Activated T-helper 1 cell treated with anti-CD3 and anti-CD28 coated beads, Interleukin-12 subunit alpha, Interleukin-12 subunit beta, Interleukin-2, Interleukin-4 antibody, amounts not matched to agents 30 ng/mL and 10 ng/mL and 1 ng/mL, durations not matched to agents 14 hours and 24 hours and 36 hours (primary cell): ENCODE measurements at regions of chr14 and their contacts with region 1.

Region 1: GRCh38 chr14:53109105-53110041 is 43.8 kb downstream of the DDHD1 start:
- DNase-seq: peak; percentile 66
- H3K4me3 Mint-ChIP-seq: no peak overlapping the region
- H3K27ac Mint-ChIP-seq: no peak overlapping the region
- H3K4me1 Mint-ChIP-seq: peaks cover 33% of the 10 kb centered on the region
- H3K27me3 Mint-ChIP-seq: no peaks in the 10 kb centered on the region

Region 2: GRCh38 chr14:52852810-52853523 is 256.4 kb before region 1 on chr14:
- intact Hi-C with region 1: no loop called
- DNase-seq: no peak
- H3K4me3 Mint-ChIP-seq: no peak overlapping the region
- H3K27ac Mint-ChIP-seq: no peak overlapping the region
- H3K4me1 Mint-ChIP-seq: no peaks in the 10 kb centered on the region
- H3K27me3 Mint-ChIP-seq: peaks cover 3% of the 10 kb centered on the region

Region 3: GRCh38 chr14:53055003-53055402 is 54.4 kb before region 1 on chr14:
- intact Hi-C with region 1: loop called (anchors 2 kb)
- DNase-seq: no peak
- H3K4me3 Mint-ChIP-seq: no peak overlapping the region
- H3K27ac Mint-ChIP-seq: no peak overlapping the region
- H3K4me1 Mint-ChIP-seq: peaks cover 13% of the 10 kb centered on the region
- H3K27me3 Mint-ChIP-seq: no peaks in the 10 kb centered on the region

Region 4: GRCh38 chr14:53093206-53093605 is 16.2 kb before region 1 on chr14:
- intact Hi-C with region 1: no loop called
- DNase-seq: no peak
- H3K4me3 Mint-ChIP-seq: no peak overlapping the region
- H3K27ac Mint-ChIP-seq: no peak overlapping the region
- H3K4me1 Mint-ChIP-seq: peaks cover 20% of the 10 kb centered on the region
- H3K27me3 Mint-ChIP-seq: no peaks in the 10 kb centered on the region

Region 5: DNA sequence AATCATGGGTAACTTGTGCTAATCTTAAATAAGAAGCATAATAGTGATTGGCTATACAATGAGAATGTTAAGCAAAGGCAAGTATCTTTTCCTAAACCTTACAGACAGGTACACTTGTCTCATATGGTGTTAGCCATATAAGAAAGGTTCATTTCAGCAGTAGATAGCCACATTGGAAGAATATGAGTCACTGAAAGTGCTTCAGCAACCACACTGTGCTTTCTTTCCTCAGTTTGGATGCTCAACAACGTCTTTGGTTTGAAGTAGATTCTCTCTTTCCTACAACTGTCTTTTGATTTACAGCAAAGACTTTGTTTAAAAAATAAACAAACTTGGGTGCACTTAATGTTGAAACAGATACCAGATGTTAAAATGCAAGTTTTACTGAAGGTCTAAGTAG is 34.9 kb after region 1 on chr14:
- intact Hi-C with region 1: loop called (anchors 1 kb)
- DNase-seq: no peak
- H3K4me3 Mint-ChIP-seq: peak overlapping the region; percentile 29
- H3K27ac Mint-ChIP-seq: peak overlapping the region; percentile 76
- H3K4me1 Mint-ChIP-seq: peaks cover 79% of the 10 kb centered on the region
- H3K27me3 Mint-ChIP-seq: no peaks in the 10 kb centered on the region

Region 6: GRCh38 chr14:53190938-53191337 is 81.6 kb after region 1 on chr14:
- intact Hi-C with region 1: loop called (anchors 1 kb)
- DNase-seq: peak; percentile 28
- H3K4me3 Mint-ChIP-seq: peak overlapping the region; percentile 80
- H3K27ac Mint-ChIP-seq: peak overlapping the region; percentile 99
- H3K4me1 Mint-ChIP-seq: peaks cover 54% of the 10 kb centered on the region
- H3K27me3 Mint-ChIP-seq: peaks cover 4% of the 10 kb centered on the region